IMR-90 (cell line): ENCODE measurements at regions of chr12 and their contacts with region 1.

Region 1: DNA sequence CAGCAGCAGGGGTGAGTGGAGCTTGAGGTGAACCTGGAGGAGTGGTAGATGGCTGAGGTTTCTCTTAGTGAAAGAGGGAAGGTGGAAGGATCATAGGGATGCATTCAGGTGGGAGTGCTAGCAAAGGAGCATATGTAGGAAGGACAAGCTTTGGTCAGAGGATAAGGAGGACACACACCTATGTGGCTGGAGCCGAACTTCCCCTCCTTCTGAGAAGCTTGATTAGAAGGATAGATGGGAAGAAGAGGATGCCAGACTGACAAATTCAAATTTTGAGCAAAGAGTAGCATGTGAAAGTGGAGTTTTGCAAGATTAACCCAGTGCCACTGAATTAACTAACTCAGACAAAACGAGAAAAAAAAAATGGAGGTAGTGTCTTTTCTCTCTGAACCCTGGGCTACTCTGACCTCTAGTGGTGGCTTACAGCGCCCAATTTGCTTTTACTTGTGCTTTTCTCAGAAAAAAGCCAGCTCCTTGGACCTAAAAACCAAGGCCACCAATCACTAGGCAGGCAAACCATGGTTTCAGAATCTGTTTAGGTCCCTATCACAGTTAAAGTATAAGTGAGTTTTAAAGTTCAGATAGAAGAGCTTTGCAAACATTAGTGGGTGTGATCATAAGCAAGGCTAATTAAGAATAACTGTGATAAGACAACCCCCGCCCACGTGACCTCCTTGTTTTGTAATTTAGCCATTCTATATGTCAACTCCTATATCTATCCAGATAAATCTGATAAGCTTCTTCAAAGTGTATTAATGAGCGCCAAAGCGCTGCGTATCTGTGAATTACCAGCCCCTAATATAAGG is 15.5 kb downstream of the EMP1 start:
- DNase-seq: peak; percentile 71
- ATAC-seq: peak; percentile 48
- H3K4me3 ChIP-seq: no peak overlapping the region
- H3K27ac ChIP-seq: no peak overlapping the region
- H3K4me1 ChIP-seq: peaks cover 22% of the 10 kb centered on the region
- H3K27me3 ChIP-seq: no peaks in the 10 kb centered on the region
- CTCF ChIP-seq: peak; percentile 80
- POLR2A ChIP-seq: peak; percentile 37; the same call in 1 of the 2 replicates
- RAD21 ChIP-seq: peak; percentile 84

Region 2: GRCh38 chr12:12786716-12787601 is 425.1 kb before region 1 on chr12:
- CTCF ChIA-PET with region 1: no interaction called
- POLR2A ChIA-PET with region 1: no interaction called
- dilution Hi-C with region 1: no loop called
- in situ Hi-C with region 1: no loop called
- intact Hi-C with region 1: loop called (anchors 10 kb)
- DNase-seq: peak; percentile 81
- ATAC-seq: peak; percentile 93
- H3K4me3 ChIP-seq: peak overlapping the region; percentile 60
- H3K27ac ChIP-seq: peak overlapping the region; percentile 90
- H3K4me1 ChIP-seq: peaks cover 15% of the 10 kb centered on the region
- H3K27me3 ChIP-seq: no peaks in the 10 kb centered on the region
- CTCF ChIP-seq: no peak
- POLR2A ChIP-seq: no peak
- RAD21 ChIP-seq: no peak

Region 3: GRCh38 chr12:12999959-13000615 is 212.0 kb before region 1 on chr12 and contains the start of gene HEBP1:
- CTCF ChIA-PET with region 1: no interaction called
- POLR2A ChIA-PET with region 1: no interaction called
- dilution Hi-C with region 1: no loop called
- in situ Hi-C with region 1: no loop called
- intact Hi-C with region 1: loop called (anchors 5 kb)
- DNase-seq: peak; percentile 84
- ATAC-seq: peak; percentile 90
- H3K4me3 ChIP-seq: peak within 1 kb of the TSS; percentile 97
- H3K27ac ChIP-seq: peak within 1 kb of the TSS; percentile 87
- H3K4me1 ChIP-seq: peaks cover 20% of the 10 kb centered on the region
- H3K27me3 ChIP-seq: no peaks in the 10 kb centered on the region
- CTCF ChIP-seq: no peak
- POLR2A ChIP-seq: peak; percentile 75
- RAD21 ChIP-seq: no peak
- total RNA-seq, gene HEBP1: 14.7 and 18.8 TPM in 2 replicates

Region 4: DNA sequence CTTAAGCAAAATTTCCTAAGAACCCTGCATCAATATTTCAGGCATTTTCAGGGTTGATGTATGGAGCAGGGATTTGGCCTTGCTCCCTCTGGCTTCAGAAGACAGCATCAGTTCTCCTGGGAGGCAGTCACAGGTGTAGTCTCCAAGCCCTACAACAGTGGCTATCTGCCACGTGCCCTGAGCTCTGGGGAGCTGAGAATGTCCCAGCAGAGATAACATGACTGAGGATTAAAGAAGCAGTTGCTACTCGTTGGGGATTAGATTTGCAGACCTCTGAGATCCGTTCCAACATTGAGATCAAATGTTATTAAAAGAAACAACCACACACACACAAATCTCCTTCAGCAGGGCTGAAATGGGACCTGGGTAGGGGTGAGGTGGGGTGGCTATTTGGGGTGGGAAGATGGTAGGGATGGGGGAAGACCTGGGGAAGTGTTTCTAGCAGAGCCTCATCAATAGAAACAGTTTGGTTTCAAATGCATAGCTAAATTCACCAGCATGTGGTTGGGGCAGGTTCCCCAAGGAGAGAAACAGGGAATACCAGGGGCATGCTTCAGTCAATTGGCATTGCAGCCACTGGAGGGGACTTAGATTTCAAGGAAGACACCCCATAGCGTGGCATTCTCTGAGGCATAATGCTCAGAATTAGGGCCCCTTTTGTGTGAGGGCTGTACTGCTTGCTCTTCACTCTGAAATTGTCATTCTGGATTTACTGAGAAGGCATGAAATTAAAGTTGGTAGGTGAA is 183.1 kb before region 1 on chr12:
- CTCF ChIA-PET with region 1: interaction called, 19 read pairs
- POLR2A ChIA-PET with region 1: no interaction called
- dilution Hi-C with region 1: no loop called
- in situ Hi-C with region 1: loop called (anchors 5 kb)
- intact Hi-C with region 1: loop called (anchors 1 kb)
- DNase-seq: no peak
- ATAC-seq: no peak
- H3K4me3 ChIP-seq: no peak overlapping the region
- H3K27ac ChIP-seq: no peak overlapping the region
- H3K4me1 ChIP-seq: peaks cover 8% of the 10 kb centered on the region
- H3K27me3 ChIP-seq: peaks cover 2% of the 10 kb centered on the region
- CTCF ChIP-seq: no peak
- POLR2A ChIP-seq: no peak
- RAD21 ChIP-seq: no peak

Region 5: GRCh38 chr12:13094347-13094746 is 117.7 kb before region 1 on chr12:
- CTCF ChIA-PET with region 1: interaction called, 19 read pairs
- POLR2A ChIA-PET with region 1: no interaction called
- dilution Hi-C with region 1: no loop called
- in situ Hi-C with region 1: loop called (anchors 5 kb)
- intact Hi-C with region 1: loop called (anchors 1 kb)
- DNase-seq: peak; percentile 70
- ATAC-seq: peak; percentile 22
- H3K4me3 ChIP-seq: no peak overlapping the region
- H3K27ac ChIP-seq: peak overlapping the region; percentile 26; the same call in 1 of the 2 replicates
- H3K4me1 ChIP-seq: peaks cover 27% of the 10 kb centered on the region
- H3K27me3 ChIP-seq: no peaks in the 10 kb centered on the region
- CTCF ChIP-seq: no peak
- POLR2A ChIP-seq: no peak
- RAD21 ChIP-seq: no peak

Region 6: DNA sequence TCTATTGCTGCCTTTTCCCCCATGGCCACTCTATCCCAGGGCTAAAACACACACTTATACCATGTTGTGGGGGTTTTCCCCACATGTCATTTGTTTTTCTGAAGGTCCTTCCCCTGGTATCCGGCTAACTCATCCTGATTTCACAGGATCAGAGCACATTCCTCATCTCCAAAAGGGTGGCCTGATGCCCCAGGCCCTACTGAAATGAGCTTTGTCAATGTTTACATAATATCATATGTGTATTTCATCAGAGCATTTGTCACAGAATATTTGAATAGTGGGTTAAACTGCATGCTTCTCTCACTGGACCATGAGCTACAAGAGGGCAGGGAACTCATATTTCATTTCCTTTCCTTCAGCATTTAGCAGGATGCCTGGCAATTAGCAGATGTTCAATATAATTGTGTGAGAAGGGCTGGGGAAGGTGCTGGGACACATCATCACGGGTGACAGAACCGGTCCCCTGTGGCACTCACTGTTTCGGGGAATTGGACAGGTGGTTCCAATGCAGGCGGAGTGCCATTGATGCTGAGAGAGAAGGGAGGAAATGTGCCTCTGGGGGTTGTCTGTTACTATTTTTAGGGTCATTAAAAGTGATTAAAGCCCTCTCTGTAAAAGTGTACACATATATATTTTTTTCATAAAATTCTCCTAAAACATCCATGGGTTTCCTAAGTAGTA is 11.3 kb after region 1 on chr12:
- CTCF ChIA-PET with region 1: interaction called, 10 read pairs
- POLR2A ChIA-PET with region 1: no interaction called
- dilution Hi-C with region 1: no loop called
- in situ Hi-C with region 1: no loop called
- intact Hi-C with region 1: no loop called
- DNase-seq: peak; percentile 93
- ATAC-seq: peak; percentile 75
- H3K4me3 ChIP-seq: no peak overlapping the region
- H3K27ac ChIP-seq: peak overlapping the region; percentile 78
- H3K4me1 ChIP-seq: peaks cover 21% of the 10 kb centered on the region
- H3K27me3 ChIP-seq: no peaks in the 10 kb centered on the region
- CTCF ChIP-seq: no peak
- POLR2A ChIP-seq: no peak
- RAD21 ChIP-seq: no peak